Activated CD4-positive, alpha-beta memory T cell treated with anti-CD3 and anti-CD28 coated beads for 36 hours (primary cell): ENCODE measurements at regions of chr10 and their contacts with region 1.

Region 1: DNA sequence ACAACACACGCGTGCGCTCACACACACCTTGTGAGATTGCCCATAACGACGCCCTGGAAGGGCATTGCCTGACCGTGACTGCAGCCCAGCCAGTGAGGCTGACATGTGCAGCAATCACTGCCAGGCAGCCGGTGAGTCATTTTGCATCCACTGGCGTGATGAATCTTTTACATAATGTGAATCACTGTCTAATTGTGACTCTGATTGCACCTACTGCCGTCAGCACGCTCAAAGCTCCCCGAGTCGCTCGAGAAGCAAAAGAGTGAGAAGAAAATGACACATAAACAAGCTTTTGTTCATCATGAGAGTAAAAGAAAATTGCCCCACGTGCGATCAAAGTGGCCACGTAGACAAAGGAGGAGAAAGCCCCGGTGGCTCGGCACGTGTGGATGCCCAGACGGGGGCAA is 117.4 kb upstream of the PFKP start:
- DNase-seq: peak; percentile 89
- H3K4me3 Mint-ChIP-seq: peak overlapping the region; percentile 20
- H3K27ac Mint-ChIP-seq: peak overlapping the region; percentile 86
- H3K4me1 Mint-ChIP-seq: peaks cover 47% of the 10 kb centered on the region
- H3K27me3 Mint-ChIP-seq: peaks cover 52% of the 10 kb centered on the region

Region 2: DNA sequence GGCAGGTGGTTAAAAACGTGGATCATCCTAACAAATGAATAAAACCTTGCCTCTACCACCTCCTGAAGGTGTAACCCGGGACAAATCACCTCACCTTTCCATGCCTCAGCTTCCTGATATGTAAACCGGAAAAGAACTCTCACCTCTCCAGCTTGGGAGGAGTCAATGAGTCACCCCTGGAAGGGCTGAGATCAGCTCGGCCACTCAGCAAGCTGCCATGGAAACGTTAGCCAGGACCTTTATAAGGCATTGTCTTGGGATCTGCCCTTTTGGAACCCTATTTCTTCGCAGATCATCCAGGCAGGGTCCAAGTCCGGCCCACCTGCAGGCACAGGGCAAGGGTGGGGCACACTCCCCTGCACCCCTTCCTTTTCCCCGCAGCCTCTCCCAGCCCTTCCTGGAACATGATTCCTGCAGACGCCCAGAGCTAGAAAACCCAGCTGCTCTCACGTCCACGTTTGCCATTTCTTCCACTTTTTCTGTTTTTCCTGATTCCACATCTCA is 35.8 kb after region 1 on chr10:
- CTCF ChIA-PET with region 1: no interaction called
- POLR2A ChIA-PET with region 1: no interaction called
- intact Hi-C with region 1: no loop called
- DNase-seq: no peak
- H3K4me3 Mint-ChIP-seq: no peak overlapping the region
- H3K27ac Mint-ChIP-seq: no peak overlapping the region
- H3K4me1 Mint-ChIP-seq: peaks cover 4% of the 10 kb centered on the region
- H3K27me3 Mint-ChIP-seq: peaks cover 30% of the 10 kb centered on the region

Region 3: GRCh38 chr10:3068201-3068967 is 118.4 kb after region 1 on chr10:
- CTCF ChIA-PET with region 1: no interaction called
- POLR2A ChIA-PET with region 1: no interaction called
- intact Hi-C with region 1: loop called (anchors 10 kb)
- DNase-seq: peak; percentile 79
- H3K4me3 Mint-ChIP-seq: peak overlapping the region; percentile 88
- H3K27ac Mint-ChIP-seq: peak overlapping the region; percentile 88
- H3K4me1 Mint-ChIP-seq: peaks cover 41% of the 10 kb centered on the region
- H3K27me3 Mint-ChIP-seq: peaks cover 6% of the 10 kb centered on the region

Region 4: DNA sequence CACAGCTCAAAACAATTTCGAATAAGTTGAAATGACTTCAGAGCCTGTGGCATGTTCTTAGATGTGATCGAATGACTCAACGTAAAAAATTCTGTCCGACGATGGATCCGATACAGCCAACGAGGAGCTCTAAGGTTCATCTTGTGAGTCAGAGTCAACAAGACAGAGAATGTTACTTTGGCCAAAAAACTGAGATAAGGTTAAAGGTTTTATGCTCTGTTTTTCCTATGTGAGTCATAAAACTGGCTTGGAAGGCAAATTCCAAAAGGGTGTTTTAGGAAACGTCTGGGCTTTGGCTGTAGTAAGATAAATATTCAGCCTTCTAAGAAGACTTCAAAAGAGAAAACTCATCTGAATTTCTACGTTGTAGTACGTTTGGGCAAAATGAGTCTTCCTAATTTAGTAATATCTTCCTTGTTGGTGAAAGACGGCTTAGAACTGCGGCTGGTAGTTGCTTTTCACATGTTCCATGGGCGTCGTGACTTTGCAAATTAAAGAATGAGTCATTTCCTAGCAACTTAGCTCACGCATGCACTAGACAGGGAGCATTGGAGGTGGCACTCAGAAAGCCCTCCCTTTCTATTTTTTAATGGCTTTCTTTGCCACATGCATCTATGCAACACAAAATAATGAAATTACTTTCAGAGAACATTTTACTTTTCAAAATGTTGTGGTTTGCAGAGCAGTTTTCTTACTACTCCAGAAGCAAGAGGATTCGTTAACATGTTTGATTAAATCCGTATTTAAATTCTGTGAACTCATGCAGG is 145.6 kb after region 1 on chr10:
- CTCF ChIA-PET with region 1: interaction called, 4 read pairs
- POLR2A ChIA-PET with region 1: interaction called, 7 read pairs
- intact Hi-C with region 1: loop called (anchors 1 kb)
- DNase-seq: peak; percentile 80
- H3K4me3 Mint-ChIP-seq: peak overlapping the region; percentile 17
- H3K27ac Mint-ChIP-seq: peak overlapping the region; percentile 87
- H3K4me1 Mint-ChIP-seq: peaks cover 74% of the 10 kb centered on the region
- H3K27me3 Mint-ChIP-seq: no peaks in the 10 kb centered on the region

Region 5: DNA sequence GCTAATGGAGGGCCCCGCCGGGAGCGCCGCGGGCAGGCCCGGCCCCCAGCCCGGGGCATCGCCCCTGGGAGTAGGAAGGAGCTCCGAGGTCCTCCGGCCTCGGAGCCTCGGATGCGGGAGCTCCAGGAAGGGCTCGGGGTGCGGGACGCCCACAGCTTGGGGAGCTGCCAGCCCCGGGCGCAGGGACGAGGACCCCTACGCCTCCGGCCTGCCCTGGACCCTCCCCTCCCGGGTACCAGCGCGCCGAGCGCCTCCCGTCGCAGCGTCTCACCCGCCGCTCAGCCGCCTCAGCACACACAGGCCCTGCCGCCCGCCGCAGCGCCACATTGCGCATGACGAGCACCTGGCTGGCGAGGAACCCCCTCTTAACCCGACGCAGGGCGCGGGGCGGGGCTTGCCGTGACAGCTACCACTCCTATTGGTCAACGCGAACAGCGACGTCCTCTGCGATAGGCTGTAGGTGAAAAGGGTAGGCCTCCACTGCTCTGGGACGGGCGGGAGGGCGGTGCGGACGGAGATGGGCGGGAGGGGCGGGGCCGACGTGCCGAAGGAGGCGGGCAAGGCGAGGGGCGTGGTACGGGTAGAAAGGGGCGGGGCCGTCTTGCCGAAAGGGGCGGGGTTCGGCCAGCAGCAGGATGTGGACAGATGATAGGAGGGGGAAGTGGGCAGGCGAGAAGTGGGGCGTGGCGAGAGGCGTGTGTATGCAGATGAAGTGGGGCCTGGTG is 222.7 kb after region 1 on chr10 and contains the start of gene PITRM1:
- CTCF ChIA-PET with region 1: no interaction called
- POLR2A ChIA-PET with region 1: no interaction called
- intact Hi-C with region 1: loop called (anchors 2 kb)
- DNase-seq: peak; percentile 99
- H3K4me3 Mint-ChIP-seq: peak within 1 kb of the TSS; percentile 86
- H3K27ac Mint-ChIP-seq: peak within 1 kb of the TSS; percentile 86
- H3K4me1 Mint-ChIP-seq: peaks cover 27% of the 10 kb centered on the region
- H3K27me3 Mint-ChIP-seq: no peaks in the 10 kb centered on the region
- total RNA-seq, gene PITRM1: 103 to 109 TPM